ENCODE measurements at regions of chr16 and their contacts with region 1.

Region 1: GRCh38 chr16:20900299-20901067 is at the starts of genes DCUN1D3 and LYRM1:
- DNase-seq: peak; percentile 90
- H3K4me3 Mint-ChIP-seq: peak within 1 kb of the TSS; percentile 83
- H3K27ac Mint-ChIP-seq: peak within 1 kb of the TSS; percentile 93
- H3K4me1 Mint-ChIP-seq: peaks cover 79% of the 10 kb centered on the region
- H3K27me3 Mint-ChIP-seq: no peaks in the 10 kb centered on the region
- total RNA-seq, gene DCUN1D3: 20.7 to 21.6 TPM
- total RNA-seq, gene LYRM1: 45.2 to 47.0 TPM

Region 2: DNA sequence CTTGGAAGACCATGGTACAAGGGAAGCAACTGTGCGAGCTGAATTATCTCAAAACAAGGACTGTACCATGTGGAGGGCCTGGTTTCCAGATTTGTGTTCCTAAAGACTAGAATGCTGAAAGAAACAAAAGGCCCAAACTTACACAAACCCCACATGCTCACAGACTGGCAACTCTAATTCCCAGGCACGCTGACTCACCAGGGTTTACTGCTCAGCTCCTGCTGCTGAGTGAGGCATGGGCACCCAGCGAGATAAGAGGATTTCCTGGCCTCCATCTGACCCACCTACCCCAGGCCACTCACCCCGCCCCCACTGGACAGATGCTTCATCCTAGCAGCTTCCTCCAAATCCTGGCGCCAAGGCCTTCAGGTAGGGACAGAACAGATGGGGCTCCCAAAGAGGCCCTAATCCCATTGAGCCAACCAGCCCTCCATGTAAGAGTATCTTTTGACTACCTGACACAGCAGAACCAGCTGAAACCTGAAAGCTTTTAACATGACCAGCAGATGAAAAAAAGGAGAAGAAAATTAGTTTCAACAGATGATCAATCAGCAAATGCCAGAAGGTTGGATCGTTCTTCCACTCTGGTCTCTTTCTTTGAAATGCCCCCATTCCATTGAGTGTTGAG is 34.2 kb before region 1 on chr16:
- CTCF ChIA-PET with region 1: interaction called, 3 read pairs
- POLR2A ChIA-PET with region 1: interaction called, 28 read pairs
- DNase-seq: no peak
- H3K4me3 Mint-ChIP-seq: no peak overlapping the region
- H3K27ac Mint-ChIP-seq: peak overlapping the region; percentile 78
- H3K4me1 Mint-ChIP-seq: peaks cover 63% of the 10 kb centered on the region
- H3K27me3 Mint-ChIP-seq: no peaks in the 10 kb centered on the region

Region 3: GRCh38 chr16:20879175-20880040 is 21.1 kb before region 1 on chr16:
- CTCF ChIA-PET with region 1: interaction called, 22 read pairs
- POLR2A ChIA-PET with region 1: interaction called, 113 read pairs
- DNase-seq: no peak
- H3K4me3 Mint-ChIP-seq: no peak overlapping the region
- H3K27ac Mint-ChIP-seq: peak overlapping the region; percentile 77
- H3K4me1 Mint-ChIP-seq: peaks cover 80% of the 10 kb centered on the region
- H3K27me3 Mint-ChIP-seq: no peaks in the 10 kb centered on the region

Region 4: DNA sequence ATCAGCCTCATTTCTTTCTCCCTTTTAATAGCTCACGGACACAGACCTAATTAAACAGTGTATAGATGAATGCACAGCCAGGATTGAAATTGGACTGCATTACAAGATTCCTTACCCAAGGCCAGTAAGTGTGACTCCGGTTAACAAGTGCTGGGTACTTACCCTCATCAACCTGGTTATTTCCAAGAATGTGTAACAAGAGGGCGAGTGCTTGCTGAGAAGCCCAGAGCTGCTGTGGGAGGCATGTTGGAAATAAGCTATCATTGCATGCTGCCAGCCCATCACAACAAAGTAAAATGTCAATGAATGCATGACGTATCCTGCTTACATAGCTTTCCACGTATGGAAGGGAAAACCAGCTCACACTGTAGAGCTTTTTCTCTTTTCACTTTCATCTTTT is 19.6 kb after region 1 on chr16:
- CTCF ChIA-PET with region 1: no interaction called
- POLR2A ChIA-PET with region 1: interaction called, 76 read pairs
- DNase-seq: no peak
- H3K4me3 Mint-ChIP-seq: no peak overlapping the region
- H3K27ac Mint-ChIP-seq: no peak overlapping the region
- H3K4me1 Mint-ChIP-seq: peaks cover 32% of the 10 kb centered on the region
- H3K27me3 Mint-ChIP-seq: no peaks in the 10 kb centered on the region

Region 5: GRCh38 chr16:20944861-20945574 is 44.5 kb after region 1 on chr16:
- CTCF ChIA-PET with region 1: interaction called, 7 read pairs
- POLR2A ChIA-PET with region 1: interaction called, 23 read pairs
- DNase-seq: peak; percentile 83
- H3K4me3 Mint-ChIP-seq: no peak overlapping the region
- H3K27ac Mint-ChIP-seq: peak overlapping the region; percentile 71
- H3K4me1 Mint-ChIP-seq: peaks cover 57% of the 10 kb centered on the region
- H3K27me3 Mint-ChIP-seq: peaks cover 2% of the 10 kb centered on the region

Region 6: GRCh38 chr16:20956319-20956718 is 55.8 kb after region 1 on chr16:
- CTCF ChIA-PET with region 1: no interaction called
- POLR2A ChIA-PET with region 1: no interaction called
- DNase-seq: no peak
- H3K4me3 Mint-ChIP-seq: no peak overlapping the region
- H3K27ac Mint-ChIP-seq: no peak overlapping the region
- H3K4me1 Mint-ChIP-seq: no peaks in the 10 kb centered on the region
- H3K27me3 Mint-ChIP-seq: peaks cover 5% of the 10 kb centered on the region

Measured in activated CD4-positive, alpha-beta memory T cell treated with anti-CD3 and anti-CD28 coated beads, Interleukin-2, amount 10 ng/mL, durations not matched to agents 7 days and 5 days (primary cell).